ENCODE measurements at regions of chr9 and their contacts with region 1.

Region 1: DNA sequence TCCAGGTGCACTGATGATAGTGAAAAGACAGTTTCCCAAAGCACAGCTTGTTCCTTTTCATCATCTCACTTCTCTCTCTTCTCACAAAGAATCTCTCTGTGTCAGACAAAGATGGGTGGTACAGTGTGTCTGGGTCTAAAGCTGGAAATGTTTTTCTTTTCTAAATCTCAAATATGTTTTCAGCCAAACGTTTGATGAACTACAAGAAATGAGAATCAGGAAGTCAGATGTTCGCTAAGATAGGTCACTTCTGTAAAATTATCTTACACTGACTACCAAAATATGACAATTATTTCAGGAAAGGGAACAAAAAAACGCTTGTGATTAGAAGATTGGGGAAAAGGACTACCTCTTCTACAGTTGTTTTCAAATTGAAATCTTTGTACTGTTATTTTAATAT is 708.8 kb downstream of the PTPRD start:
- DNase-seq: peak; percentile 38
- H3K4me3 ChIP-seq: peak overlapping the region; percentile 33
- H3K27ac ChIP-seq: peak overlapping the region; percentile 69
- H3K4me1 ChIP-seq: peaks cover 33% of the 10 kb centered on the region
- CTCF ChIP-seq: no peak

Region 2: GRCh38 chr9:7976167-7976755 is 1927.8 kb before region 1 on chr9:
- CTCF ChIA-PET with region 1: no interaction called
- POLR2A ChIA-PET with region 1: no interaction called
- intact Hi-C with region 1: loop called (anchors 10 kb)
- DNase-seq: peak; percentile 94
- H3K4me3 ChIP-seq: peak overlapping the region; percentile 44
- H3K27ac ChIP-seq: peak overlapping the region; percentile 93
- H3K4me1 ChIP-seq: peaks cover 78% of the 10 kb centered on the region
- CTCF ChIP-seq: no peak

Region 3: GRCh38 chr9:9603345-9603744 is 300.7 kb before region 1 on chr9:
- CTCF ChIA-PET with region 1: interaction called, 6 read pairs
- POLR2A ChIA-PET with region 1: interaction called, 25 read pairs
- intact Hi-C with region 1: no loop called
- DNase-seq: no peak
- H3K4me3 ChIP-seq: no peak overlapping the region
- H3K27ac ChIP-seq: no peak overlapping the region
- H3K4me1 ChIP-seq: peaks cover 16% of the 10 kb centered on the region
- CTCF ChIP-seq: no peak

Region 4: DNA sequence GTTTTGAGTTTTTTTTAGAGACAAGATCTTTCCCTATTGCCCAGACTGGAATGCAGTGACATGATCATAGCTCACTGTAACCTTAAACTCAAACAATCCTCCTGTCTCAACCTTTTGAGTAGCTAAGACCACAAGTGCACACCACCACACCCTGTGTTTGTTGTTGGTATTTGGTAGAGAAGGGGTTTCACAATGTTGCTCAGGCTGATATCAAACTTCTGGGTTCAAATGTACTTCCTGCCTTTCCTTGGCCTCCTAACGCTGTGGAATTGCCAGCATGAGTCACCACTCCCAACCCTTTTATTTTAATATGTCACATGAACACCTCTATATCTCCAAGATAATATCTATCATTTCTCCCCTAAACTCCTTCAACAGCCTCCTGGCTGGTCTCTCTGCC is 10.2 kb before region 1 on chr9:
- CTCF ChIA-PET with region 1: no interaction called
- POLR2A ChIA-PET with region 1: interaction called, 34 read pairs
- intact Hi-C with region 1: no loop called
- DNase-seq: no peak
- H3K4me3 ChIP-seq: no peak overlapping the region
- H3K27ac ChIP-seq: no peak overlapping the region
- H3K4me1 ChIP-seq: no peaks in the 10 kb centered on the region
- CTCF ChIP-seq: no peak